ENCODE measurements at regions of chr12 and their contacts with region 1.

Region 1: GRCh38 chr12:15882118-15882971 is at the start of gene STRAP:
- DNase-seq: peak; percentile 96
- H3K4me3 Mint-ChIP-seq: peak within 1 kb of the TSS; percentile 97
- H3K27ac Mint-ChIP-seq: peak within 1 kb of the TSS; percentile 96
- H3K4me1 Mint-ChIP-seq: peaks cover 39% of the 10 kb centered on the region
- H3K27me3 Mint-ChIP-seq: no peaks in the 10 kb centered on the region
- total RNA-seq, gene STRAP: 131 to 133 TPM

Region 2: DNA sequence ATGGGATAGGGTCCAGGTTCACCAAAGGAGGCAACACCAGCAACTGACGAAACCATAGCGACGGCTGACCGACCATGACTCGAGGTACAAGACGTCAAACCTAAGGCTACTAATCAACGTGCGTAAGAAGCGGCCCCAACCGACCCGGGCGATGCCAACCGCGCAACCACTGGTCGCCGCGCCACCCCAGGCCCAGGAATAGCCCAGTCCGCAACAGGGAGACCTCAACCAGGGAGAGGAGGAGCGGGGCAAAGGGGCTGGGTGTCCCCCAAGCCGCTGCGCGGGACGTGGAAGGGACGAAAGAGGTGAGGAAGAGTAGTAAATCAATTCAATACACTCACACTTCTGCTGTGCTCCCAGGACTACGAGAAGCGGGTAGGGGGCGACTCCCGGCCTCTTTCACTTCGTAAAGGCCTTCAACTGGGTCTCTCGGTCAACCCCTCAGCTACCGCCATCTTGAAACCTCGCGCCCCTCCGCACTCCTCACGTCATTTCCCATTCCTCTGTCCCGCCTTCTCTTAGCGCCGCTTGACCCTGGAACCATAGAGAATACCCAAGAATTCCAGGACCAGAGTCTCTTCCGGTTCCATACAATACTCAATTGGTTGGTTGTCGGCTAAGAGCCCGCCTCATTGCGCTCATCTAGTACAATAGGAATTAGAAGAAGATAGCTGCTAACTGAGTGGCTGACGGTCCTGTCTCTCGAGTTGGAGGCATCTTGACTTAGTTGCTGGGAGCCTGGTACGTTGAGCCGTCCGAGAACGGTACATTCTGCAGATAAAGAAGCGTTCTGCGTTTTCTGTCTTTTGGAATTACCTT is 1079.1 kb before region 1 on chr12 and contains the starts of genes C12orf60 and WBP11:
- CTCF ChIA-PET with region 1: no interaction called
- intact Hi-C with region 1: loop called (anchors 1 kb)
- DNase-seq: peak; percentile 94
- H3K4me3 Mint-ChIP-seq: no peak within 1 kb of the TSS
- H3K27ac Mint-ChIP-seq: no peak within 1 kb of the TSS
- H3K4me1 Mint-ChIP-seq: peaks cover 34% of the 10 kb centered on the region
- H3K27me3 Mint-ChIP-seq: no peaks in the 10 kb centered on the region
- total RNA-seq, gene C12orf60: 2.0 to 3.1 TPM
- total RNA-seq, gene WBP11: 105 to 115 TPM

Region 3: DNA sequence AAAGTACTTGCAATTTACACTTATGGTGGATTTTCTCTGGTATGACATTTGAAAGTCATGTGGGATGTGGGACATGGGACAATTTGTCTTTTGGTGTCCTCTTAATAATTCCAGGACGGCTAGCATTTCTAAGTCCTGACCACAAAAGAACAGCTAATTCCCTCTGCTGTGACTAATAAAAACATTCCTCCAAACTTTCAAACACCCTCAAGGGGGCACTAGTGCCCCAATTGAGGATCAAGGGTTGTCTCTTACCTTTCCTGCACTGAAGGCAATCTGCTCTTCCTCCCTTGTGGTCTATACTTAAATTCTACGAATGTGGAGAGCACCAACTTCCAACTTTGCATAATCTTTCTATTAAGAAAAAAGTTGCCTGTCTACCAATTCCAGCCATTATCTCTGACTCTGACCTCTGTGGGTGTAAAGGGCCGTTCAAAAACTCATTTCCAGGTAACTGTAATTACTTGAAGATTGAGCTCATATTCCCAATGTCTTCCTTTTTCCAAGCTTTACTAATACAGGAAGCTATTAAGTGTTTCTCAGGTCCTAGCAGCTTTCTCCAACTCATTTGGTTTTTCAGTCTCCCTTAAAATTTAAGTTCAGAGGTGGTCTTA is 349.9 kb before region 1 on chr12:
- CTCF ChIA-PET with region 1: no interaction called
- intact Hi-C with region 1: loop called (anchors 1 kb)
- DNase-seq: peak; percentile 72
- H3K4me3 Mint-ChIP-seq: no peak overlapping the region
- H3K27ac Mint-ChIP-seq: no peak overlapping the region
- H3K4me1 Mint-ChIP-seq: peaks cover 18% of the 10 kb centered on the region
- H3K27me3 Mint-ChIP-seq: no peaks in the 10 kb centered on the region

Region 4: GRCh38 chr12:15590180-15590826 is 292.0 kb before region 1 on chr12:
- CTCF ChIA-PET with region 1: no interaction called
- intact Hi-C with region 1: loop called (anchors 1 kb)
- DNase-seq: peak; percentile 63
- H3K4me3 Mint-ChIP-seq: peak overlapping the region; percentile 71
- H3K27ac Mint-ChIP-seq: peak overlapping the region; percentile 8
- H3K4me1 Mint-ChIP-seq: peaks cover 8% of the 10 kb centered on the region
- H3K27me3 Mint-ChIP-seq: no peaks in the 10 kb centered on the region

Region 5: GRCh38 chr12:15789220-15790171 is 92.8 kb before region 1 on chr12 and contains the start of gene EPS8:
- CTCF ChIA-PET with region 1: no interaction called
- intact Hi-C with region 1: loop called (anchors 1 kb)
- DNase-seq: peak; percentile 88
- H3K4me3 Mint-ChIP-seq: peak within 1 kb of the TSS; percentile 82
- H3K27ac Mint-ChIP-seq: no peak within 1 kb of the TSS
- H3K4me1 Mint-ChIP-seq: peaks cover 15% of the 10 kb centered on the region
- H3K27me3 Mint-ChIP-seq: peaks cover 49% of the 10 kb centered on the region
- total RNA-seq, gene EPS8: 3.2 to 5.6 TPM

Region 6: DNA sequence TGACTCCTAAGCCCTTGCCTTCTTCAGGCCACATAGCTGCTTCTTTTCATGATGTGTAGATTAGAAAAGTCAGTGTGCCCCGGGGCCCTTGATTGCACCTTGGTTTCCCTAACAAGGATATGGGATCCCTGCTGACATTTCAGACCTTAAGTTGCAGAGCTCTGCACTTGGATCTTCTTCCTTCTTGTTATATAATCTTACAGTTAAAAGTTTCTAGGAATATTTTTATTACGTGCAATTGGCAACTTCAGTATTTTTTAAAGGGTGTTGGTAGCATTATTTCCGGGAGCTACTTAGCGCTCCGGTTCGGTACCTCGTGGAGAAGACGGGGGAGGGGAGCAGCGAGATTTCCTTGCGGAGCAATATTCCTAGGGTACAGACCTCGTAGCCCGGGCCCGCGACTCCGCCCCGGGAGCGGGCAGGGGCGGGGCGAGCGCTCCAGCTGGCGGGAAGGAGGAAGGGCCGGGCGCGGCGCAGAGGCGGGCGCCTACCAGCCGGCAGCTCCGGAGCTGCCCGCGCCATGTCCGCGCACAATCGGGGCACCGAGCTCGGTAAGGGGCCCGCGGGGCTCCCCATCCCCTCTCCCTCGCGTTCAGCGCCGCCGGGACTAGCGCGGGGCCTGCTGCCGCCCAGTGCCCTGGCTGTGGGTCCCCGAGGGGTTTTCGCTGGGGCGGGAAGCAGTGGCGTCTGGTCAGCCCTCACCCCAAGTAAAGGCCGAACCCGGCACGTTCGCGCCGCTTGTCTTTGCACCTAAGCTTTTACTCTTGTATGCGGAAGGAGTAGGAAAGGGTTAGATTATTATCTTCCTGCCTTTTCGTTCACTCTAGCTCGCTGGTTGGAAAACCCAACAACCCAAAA is 28.7 kb after region 1 on chr12 and contains the start of gene DERA:
- CTCF ChIA-PET with region 1: no interaction called
- intact Hi-C with region 1: loop called (anchors 1 kb)
- DNase-seq: peak; percentile 63
- H3K4me3 Mint-ChIP-seq: peak within 1 kb of the TSS; percentile 84
- H3K27ac Mint-ChIP-seq: peak within 1 kb of the TSS; percentile 80
- H3K4me1 Mint-ChIP-seq: peaks cover 10% of the 10 kb centered on the region
- H3K27me3 Mint-ChIP-seq: no peaks in the 10 kb centered on the region
- total RNA-seq, gene DERA: 29.8 to 31.0 TPM

Measured in activated naive CD4-positive, alpha-beta T cell treated with anti-CD3 and anti-CD28 coated beads for 36 hours (primary cell).